A673 (cell line): ENCODE measurements at regions of chr18 and their contacts with region 1.

Region 1: DNA sequence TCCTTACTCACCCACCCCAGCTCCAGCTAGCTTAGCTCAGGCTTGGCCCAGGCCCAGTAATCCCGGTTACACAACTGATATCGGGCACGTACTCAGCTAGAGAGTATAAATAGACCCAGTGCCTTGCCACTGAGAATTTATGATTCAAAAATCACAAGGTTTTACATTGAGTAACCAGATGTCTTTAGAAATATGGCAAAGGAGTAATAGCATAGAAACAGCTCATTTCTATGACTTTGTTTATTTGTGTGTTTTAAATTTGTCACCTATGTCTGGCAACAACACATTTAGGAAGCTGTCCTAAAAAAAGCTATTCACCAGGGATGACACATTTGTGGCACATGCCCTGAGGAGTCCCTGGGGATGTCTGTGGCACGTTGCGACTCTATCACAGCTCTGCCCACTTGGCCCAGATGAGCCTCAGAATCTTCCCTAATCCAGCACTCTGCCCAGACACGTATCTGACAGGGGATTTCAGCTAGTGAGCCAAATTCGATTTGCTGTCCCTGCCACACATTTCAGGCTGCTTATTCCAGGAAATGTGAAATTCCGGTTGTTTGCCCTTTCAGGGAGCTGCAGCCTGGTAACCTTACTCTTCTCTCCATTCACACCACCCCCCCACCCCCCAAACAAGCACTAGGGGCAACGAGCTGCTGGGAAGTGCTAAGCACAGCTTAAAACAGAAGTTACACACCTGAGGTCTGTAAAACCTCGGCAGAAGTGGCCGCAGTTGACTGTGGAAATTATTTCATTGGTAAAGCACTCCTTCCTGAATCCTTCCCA is 85.4 kb upstream of the ZCCHC2 start:
- DNase-seq: peak; percentile 40
- H3K4me3 ChIP-seq: no peak overlapping the region
- H3K27ac ChIP-seq: no peak overlapping the region
- H3K4me1 ChIP-seq: peaks cover 34% of the 10 kb centered on the region
- H3K27me3 ChIP-seq: no peaks in the 10 kb centered on the region
- CTCF ChIP-seq: no peak

Region 2: DNA sequence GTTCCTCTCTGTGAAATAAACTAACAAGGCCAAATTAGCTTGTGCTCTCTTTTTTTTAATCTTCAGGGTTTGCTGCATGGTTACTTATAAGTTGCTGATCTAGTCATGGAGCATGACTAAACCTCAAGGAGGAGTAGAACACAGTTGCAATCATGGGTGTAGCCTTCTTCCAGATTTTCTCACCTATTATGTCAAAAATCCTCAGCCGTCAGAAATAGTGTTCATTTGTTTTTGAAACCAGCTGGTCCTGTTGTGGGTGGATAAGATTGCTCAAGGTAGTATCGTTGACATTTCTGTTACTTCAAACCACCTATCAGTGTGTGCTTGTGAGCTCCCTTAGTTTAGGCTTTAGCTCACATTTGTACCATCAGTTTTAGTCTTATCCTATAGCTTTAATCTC is 239.2 kb before region 1 on chr18:
- CTCF ChIA-PET with region 1: no interaction called
- POLR2A ChIA-PET with region 1: no interaction called
- intact Hi-C with region 1: no loop called
- DNase-seq: no peak
- H3K4me3 ChIP-seq: no peak overlapping the region
- H3K27ac ChIP-seq: no peak overlapping the region
- H3K4me1 ChIP-seq: no peaks in the 10 kb centered on the region
- H3K27me3 ChIP-seq: no peaks in the 10 kb centered on the region
- CTCF ChIP-seq: no peak

Region 3: GRCh38 chr18:62339106-62339988 is 98.1 kb before region 1 on chr18:
- CTCF ChIA-PET with region 1: no interaction called
- POLR2A ChIA-PET with region 1: no interaction called
- intact Hi-C with region 1: no loop called
- DNase-seq: no peak
- H3K4me3 ChIP-seq: no peak overlapping the region
- H3K27ac ChIP-seq: no peak overlapping the region
- H3K4me1 ChIP-seq: no peaks in the 10 kb centered on the region
- H3K27me3 ChIP-seq: no peaks in the 10 kb centered on the region
- CTCF ChIP-seq: no peak

Region 4: DNA sequence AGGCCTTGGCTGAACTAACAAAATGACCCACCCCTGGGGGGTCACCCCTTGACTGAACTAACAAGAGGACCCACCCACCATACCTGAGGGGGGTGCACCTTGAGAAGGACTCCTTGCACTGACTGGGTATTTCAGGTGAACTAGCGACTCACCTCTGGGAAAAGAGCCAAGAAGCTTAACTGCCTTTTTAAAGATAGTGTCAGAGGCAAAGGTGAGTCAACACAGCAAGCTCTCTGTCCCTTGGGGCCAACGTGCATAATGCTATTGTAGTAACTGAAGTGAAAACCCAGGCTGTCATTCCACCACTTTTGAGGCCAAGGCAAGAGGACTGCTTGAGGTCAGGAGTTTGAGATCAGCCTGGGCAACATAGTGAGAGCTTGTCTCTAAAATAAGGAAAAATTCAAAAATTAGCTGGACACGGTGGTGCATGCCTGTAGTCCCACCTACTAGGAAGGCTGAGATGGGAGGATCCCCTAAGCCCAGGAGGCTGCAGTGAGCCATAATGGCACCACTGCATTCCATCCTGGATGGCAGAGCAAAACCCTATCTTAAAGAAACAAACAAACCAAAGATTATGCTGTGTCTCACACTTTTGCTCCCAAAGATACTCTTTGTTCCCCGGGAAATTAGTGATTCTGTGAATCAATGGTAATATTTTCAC is 49.0 kb after region 1 on chr18:
- CTCF ChIA-PET with region 1: no interaction called
- POLR2A ChIA-PET with region 1: no interaction called
- intact Hi-C with region 1: no loop called
- DNase-seq: no peak
- H3K4me3 ChIP-seq: no peak overlapping the region
- H3K27ac ChIP-seq: no peak overlapping the region
- H3K4me1 ChIP-seq: no peaks in the 10 kb centered on the region
- H3K27me3 ChIP-seq: no peaks in the 10 kb centered on the region
- CTCF ChIP-seq: no peak

Region 5: DNA sequence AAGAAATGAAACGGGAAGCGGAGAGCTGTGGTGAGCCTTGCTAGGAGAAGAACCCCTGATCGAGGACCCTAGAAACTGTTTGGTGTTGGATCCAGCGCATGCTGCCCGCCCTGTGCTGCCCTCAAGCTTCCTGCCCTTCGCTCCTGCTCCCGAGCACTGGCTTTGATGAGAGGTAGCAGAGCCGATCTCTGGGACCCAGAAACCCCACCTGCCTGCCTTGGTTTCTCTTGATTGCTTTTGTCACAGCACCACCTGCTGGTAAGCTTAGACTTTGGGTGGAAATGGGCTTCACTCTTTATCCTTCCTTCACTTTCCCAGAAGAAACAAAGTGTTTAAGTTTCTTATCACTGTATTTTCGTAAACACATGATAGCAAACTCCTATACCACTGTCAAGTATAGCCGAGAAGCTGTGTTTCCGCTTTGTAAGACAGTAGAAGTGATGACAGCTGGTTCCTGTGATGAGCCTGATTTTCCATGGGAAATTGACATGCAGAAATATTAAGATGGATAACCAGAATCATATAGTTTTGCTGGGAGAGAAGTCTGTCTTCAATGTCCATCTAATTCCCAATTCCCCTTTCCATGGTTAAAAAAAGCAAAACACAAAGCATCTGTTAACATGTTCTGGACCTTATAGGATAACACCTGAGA is 545.3 kb after region 1 on chr18:
- CTCF ChIA-PET with region 1: no interaction called
- POLR2A ChIA-PET with region 1: no interaction called
- intact Hi-C with region 1: loop called (anchors 10 kb)
- DNase-seq: peak; percentile 62
- H3K4me3 ChIP-seq: no peak overlapping the region
- H3K27ac ChIP-seq: no peak overlapping the region
- H3K4me1 ChIP-seq: no peaks in the 10 kb centered on the region
- H3K27me3 ChIP-seq: no peaks in the 10 kb centered on the region
- CTCF ChIP-seq: peak; percentile 85